ENCODE measurements at regions of chr9 and their contacts with region 1.

Region 1: DNA sequence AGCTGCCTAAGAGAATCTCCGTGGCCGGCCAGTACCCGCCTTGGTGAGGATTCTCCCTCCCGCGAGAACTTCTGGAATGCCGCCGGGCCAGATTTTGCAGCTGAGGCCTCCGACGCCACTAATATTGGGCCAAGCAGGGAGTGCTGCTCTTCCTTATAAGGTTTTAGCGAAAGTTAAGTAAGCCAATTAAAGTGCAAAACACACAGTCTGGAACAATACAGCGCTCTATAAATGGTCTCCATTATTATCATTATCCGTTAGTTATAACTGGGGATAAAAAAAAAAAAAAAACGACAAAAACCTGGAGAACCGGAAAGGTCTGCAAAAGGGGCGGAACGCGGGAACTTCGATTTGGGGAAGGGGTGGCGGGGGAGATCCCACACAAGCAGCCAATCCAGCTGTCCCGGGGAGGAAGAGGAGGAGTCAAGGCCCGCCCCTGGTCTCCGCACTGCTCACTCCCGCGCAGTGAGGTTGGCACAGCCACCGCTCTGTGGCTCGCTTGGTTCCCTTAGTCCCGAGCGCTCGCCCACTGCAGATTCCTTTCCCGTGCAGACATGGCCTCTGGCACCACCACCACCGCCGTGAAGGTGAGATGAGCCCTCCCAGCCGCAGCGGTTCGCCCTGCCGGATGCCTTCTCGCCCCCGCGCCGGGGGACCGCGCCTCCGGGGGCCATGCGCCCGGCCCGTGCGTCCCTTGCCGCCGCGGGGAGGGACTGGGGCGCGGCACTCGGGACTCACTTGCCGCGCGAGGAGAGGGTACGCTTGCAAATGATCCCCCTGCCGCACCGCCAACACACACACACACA is at the start of gene MTAP:
- DNase-seq: peak; percentile 86
- CTCF ChIP-seq: no peak

Region 2: DNA sequence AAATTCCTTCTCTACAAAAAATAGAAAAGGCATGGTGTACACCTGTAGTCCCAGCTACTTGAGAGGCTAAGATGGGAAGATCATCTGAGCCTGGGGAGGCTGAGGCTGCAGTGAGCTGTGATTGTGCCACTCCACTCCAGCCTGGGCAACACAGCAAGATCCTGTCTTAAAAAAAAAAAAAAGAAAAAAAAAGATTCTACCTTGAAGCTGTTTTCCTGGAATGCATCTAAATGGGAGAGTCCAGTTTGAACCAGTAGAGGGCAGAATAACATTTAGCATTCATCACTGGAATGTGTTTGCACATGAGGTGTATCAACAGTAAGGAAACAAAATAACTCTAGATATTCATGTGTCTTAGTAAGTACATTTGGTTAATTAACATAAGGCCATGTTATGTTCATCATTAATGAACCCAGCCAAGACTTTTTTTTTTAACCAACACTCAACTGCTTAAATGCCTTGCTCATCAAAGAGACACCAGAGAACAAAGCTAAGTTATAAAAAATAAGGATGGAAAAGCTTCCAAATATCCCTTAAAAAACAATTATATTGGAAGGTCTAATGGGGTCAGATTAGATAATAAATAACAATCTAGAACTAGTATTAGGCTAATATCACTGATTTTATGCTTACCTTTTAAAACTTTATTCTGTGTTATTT is 336.4 kb before region 1 on chr9:
- in situ Hi-C with region 1: no loop called
- DNase-seq: peak; percentile 44
- CTCF ChIP-seq: peak; percentile 71

Region 3: DNA sequence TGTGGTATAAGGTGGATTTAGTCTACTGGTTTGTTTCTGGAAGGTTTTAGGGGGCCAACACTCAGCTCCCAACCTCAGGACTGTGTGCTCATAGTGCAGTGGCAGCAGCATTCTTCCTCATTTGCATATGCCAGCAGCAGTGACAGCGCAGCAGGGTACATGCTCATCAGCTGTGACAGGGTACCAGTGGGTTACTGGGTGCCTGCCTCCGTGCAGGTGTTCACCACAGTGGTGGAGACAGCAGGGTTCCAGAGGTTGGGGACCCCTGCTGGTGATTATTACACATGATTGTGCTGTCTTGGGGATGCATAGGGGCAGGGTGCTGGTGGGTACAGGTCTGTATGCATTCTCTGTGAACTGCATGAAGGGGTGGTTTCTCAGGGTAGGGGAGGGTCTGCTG is 274.8 kb before region 1 on chr9:
- in situ Hi-C with region 1: no loop called
- DNase-seq: no peak
- CTCF ChIP-seq: peak; percentile 28

Region 4: GRCh38 chr9:22037954-22038690 is 235.7 kb after region 1 on chr9:
- in situ Hi-C with region 1: loop called (anchors 25 kb)
- DNase-seq: no peak
- CTCF ChIP-seq: peak; percentile 51

Region 5: GRCh38 chr9:22469928-22470544 is 667.6 kb after region 1 on chr9:
- in situ Hi-C with region 1: loop called (anchors 25 kb)
- DNase-seq: no peak
- CTCF ChIP-seq: peak; percentile 66